H1 (cell line): ENCODE measurements at regions of chr3 and their contacts with region 1.

Region 1: DNA sequence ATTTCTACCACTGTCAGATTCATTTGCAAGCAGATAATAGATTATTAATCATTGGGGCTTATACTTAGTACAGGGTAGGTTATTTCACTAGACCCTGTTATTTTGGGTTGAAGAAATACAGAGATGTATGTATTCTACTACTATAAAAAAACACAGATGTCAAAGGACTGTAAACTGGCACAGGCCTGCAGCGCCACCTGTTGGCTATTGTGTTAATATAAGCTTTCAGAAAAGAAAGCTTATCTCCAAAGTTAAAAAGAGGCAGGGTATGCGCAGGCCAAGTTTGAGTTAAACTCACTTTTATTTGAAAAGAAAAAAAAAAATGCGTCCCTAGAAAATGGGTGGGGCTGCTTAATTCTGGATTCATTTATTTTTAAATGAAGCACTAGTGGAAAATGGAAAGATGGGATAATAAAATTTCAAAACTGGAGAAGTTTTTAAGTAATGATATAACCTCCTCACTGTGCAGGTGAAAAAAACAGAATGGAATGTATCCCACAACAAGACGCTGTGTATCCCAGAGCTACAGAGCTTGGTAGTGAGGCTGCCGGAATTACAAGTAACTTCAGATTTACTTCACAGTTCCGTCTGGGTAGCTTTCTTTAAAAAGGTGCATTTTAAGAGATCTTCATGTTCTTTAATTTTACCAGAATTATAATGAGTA is 407.2 kb upstream of the TGFBR2 start:
- DNase-seq: peak; percentile 7 to 69
- H3K4me3 ChIP-seq: no peak overlapping the region
- H3K27ac ChIP-seq: no peak overlapping the region
- H3K4me1 ChIP-seq: no peaks in the 10 kb centered on the region
- H3K27me3 ChIP-seq: no peaks in the 10 kb centered on the region
- CTCF ChIP-seq: peak in 2 of 3 experiments; percentile 53 to 69; a peak in 3 of 4 replicates
- EP300 ChIP-seq: no peak
- POLR2A ChIP-seq: no peak
- RAD21 ChIP-seq: peak; percentile 86 to 87

Region 2: GRCh38 chr3:30012941-30013543 is 186.2 kb before region 1 on chr3:
- CTCF ChIA-PET with region 1: interaction called, 37 read pairs
- POLR2A ChIA-PET with region 1: no interaction called
- DNase-seq: peak in 1 of 2 experiments; percentile 85
- H3K4me3 ChIP-seq: no peak overlapping the region
- H3K27ac ChIP-seq: no peak overlapping the region
- H3K4me1 ChIP-seq: no peaks in the 10 kb centered on the region
- H3K27me3 ChIP-seq: no peaks in the 10 kb centered on the region
- CTCF ChIP-seq: peak in 2 of 3 experiments; percentile 57 to 64; a peak in 3 of 4 replicates
- EP300 ChIP-seq: no peak
- POLR2A ChIP-seq: no peak
- RAD21 ChIP-seq: peak; percentile 83 to 89

Region 3: DNA sequence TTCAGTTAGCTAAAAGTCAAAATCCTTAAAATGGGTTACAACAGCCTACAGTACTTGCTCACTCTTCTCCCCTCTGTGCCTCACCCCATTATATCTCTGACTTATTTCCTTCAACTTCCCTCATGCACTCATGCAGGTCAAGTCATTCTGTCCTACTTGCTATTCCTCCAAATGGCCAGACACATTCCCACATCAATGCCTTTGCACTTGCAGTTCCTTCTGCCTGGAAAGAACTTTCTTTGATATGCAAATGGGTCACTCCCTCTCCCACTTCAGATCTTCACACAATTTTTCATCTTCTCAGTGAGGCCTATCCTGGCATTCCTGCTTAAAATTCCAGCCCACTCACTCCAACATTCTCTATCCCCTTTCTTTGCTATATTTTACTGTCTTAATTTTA is 140.0 kb before region 1 on chr3:
- CTCF ChIA-PET with region 1: interaction called, 10 read pairs
- POLR2A ChIA-PET with region 1: no interaction called
- DNase-seq: no peak
- H3K4me3 ChIP-seq: no peak overlapping the region
- H3K27ac ChIP-seq: no peak overlapping the region
- H3K4me1 ChIP-seq: peaks cover 0 to 8% (median 0%) of the 10 kb centered on the region in 4 experiments; a peak in 2 of 7 replicates
- H3K27me3 ChIP-seq: 0 out of 7 replicates have a peak, but pooled peaks cover 0 to 2% (median 0%) of the 10 kb centered on the region in 4 experiments
- CTCF ChIP-seq: no peak
- EP300 ChIP-seq: no peak
- POLR2A ChIP-seq: no peak
- RAD21 ChIP-seq: no peak

Region 4: GRCh38 chr3:30112902-30113484 is 86.2 kb before region 1 on chr3:
- CTCF ChIA-PET with region 1: interaction called, 32 read pairs
- POLR2A ChIA-PET with region 1: no interaction called
- DNase-seq: no peak
- H3K4me3 ChIP-seq: no peak overlapping the region
- H3K27ac ChIP-seq: no peak overlapping the region
- H3K4me1 ChIP-seq: no peaks in the 10 kb centered on the region; a peak in 1 of 7 replicates
- H3K27me3 ChIP-seq: no peaks in the 10 kb centered on the region
- CTCF ChIP-seq: peak in 2 of 3 experiments; percentile 31 to 36; a peak in 2 of 4 replicates
- EP300 ChIP-seq: no peak
- POLR2A ChIP-seq: no peak
- RAD21 ChIP-seq: peak in 1 of 2 experiments; percentile 63

Region 5: DNA sequence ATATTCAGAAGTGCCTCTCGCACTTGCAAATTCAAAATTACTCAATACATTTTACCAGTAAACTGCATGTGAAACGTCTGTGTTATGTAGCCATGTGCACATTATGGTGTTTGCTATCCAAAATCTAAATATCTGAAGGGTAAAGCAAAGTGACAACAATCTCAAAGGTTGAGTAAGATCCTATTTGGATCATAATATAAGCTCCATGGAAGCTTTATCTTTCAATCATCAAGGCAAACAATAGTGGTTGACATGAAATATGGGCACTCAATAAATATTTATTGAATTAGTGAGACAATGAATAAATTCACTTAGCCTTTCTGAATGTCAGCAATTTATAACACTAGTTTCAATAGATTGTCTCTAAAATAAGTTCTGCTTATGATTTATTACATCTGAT is 48.3 kb before region 1 on chr3:
- CTCF ChIA-PET with region 1: interaction called, 10 read pairs
- POLR2A ChIA-PET with region 1: no interaction called
- DNase-seq: no peak
- H3K4me3 ChIP-seq: no peak overlapping the region
- H3K27ac ChIP-seq: no peak overlapping the region
- H3K4me1 ChIP-seq: no peaks in the 10 kb centered on the region
- H3K27me3 ChIP-seq: no peaks in the 10 kb centered on the region
- CTCF ChIP-seq: no peak
- EP300 ChIP-seq: no peak
- POLR2A ChIP-seq: no peak
- RAD21 ChIP-seq: no peak

Region 6: GRCh38 chr3:30188713-30189112 is 10.5 kb before region 1 on chr3:
- CTCF ChIA-PET with region 1: interaction called, 28 read pairs
- POLR2A ChIA-PET with region 1: no interaction called
- DNase-seq: no peak
- H3K4me3 ChIP-seq: no peak overlapping the region
- H3K27ac ChIP-seq: no peak overlapping the region
- H3K4me1 ChIP-seq: no peaks in the 10 kb centered on the region
- H3K27me3 ChIP-seq: no peaks in the 10 kb centered on the region
- CTCF ChIP-seq: no peak
- EP300 ChIP-seq: no peak
- POLR2A ChIP-seq: no peak
- RAD21 ChIP-seq: no peak

Region 7: GRCh38 chr3:30693470-30694120 is 494.4 kb after region 1 on chr3:
- CTCF ChIA-PET with region 1: interaction called, 60 read pairs
- POLR2A ChIA-PET with region 1: no interaction called
- DNase-seq: no peak
- H3K4me3 ChIP-seq: no peak overlapping the region
- H3K27ac ChIP-seq: no peak overlapping the region
- H3K4me1 ChIP-seq: peaks cover 0 to 13% (median 5%) of the 10 kb centered on the region in 4 experiments; a peak in 5 of 7 replicates
- H3K27me3 ChIP-seq: no peaks in the 10 kb centered on the region
- CTCF ChIP-seq: peak in 2 of 3 experiments; percentile 80 to 85; a peak in 3 of 4 replicates
- EP300 ChIP-seq: no peak
- POLR2A ChIP-seq: no peak
- RAD21 ChIP-seq: peak; percentile 99